GM23248 (cell line): ENCODE measurements at regions of chr10 and their contacts with region 1.

Region 1: GRCh38 chr10:112307358-112308124 is 24.3 kb downstream of the TECTB start:
- DNase-seq: peak; percentile 67
- H3K4me3 ChIP-seq: no peak overlapping the region
- H3K27ac ChIP-seq: no peak overlapping the region
- H3K4me1 ChIP-seq: peaks cover 22% of the 10 kb centered on the region
- H3K27me3 ChIP-seq: no peaks in the 10 kb centered on the region

Region 2: GRCh38 chr10:112183329-112184051 is 124.1 kb before region 1 on chr10 and contains the start of gene GPAM:
- in situ Hi-C with region 1: loop called (anchors 10 kb)
- DNase-seq: peak; percentile 94
- H3K4me3 ChIP-seq: peak within 1 kb of the TSS; percentile 80
- H3K27ac ChIP-seq: peak within 1 kb of the TSS; percentile 83
- H3K4me1 ChIP-seq: peaks cover 6% of the 10 kb centered on the region
- H3K27me3 ChIP-seq: no peaks in the 10 kb centered on the region
- total RNA-seq, gene GPAM: 9.0 and 12.5 TPM in 2 replicates

Region 3: DNA sequence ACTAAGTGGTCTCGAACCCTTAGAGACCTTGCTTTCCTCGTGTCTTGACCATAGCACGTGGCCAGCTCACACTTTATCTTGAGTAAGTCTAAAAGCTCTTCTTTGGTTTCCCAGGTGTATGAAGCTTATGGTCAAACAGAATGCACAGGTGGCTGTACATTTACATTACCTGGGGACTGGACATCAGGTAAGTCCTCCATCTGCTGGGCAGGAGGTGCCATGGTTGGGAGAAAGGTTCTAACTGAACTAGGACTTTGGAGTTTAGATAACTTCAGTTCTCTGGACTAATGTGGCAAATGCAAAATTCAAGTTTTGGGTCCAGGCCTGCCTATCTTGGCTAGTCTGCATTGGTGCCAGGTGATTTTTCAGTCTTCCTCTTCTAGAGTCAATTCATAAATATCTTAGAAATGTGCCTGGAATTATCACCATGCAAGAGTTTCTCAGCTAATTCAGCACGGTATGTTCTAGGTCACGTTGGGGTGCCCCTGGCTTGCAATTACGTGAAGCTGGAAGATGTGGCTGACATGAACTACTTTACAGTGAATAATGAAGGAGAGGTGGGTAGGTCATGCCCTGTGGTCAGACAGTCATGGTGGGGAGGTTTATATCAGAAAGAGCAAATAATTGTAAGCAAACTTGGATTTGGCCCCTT is 114.1 kb after region 1 on chr10:
- in situ Hi-C with region 1: no loop called
- DNase-seq: no peak
- H3K4me3 ChIP-seq: no peak overlapping the region
- H3K27ac ChIP-seq: no peak overlapping the region
- H3K4me1 ChIP-seq: no peaks in the 10 kb centered on the region
- H3K27me3 ChIP-seq: no peaks in the 10 kb centered on the region

Region 4: GRCh38 chr10:113891476-113891875 is 1583.9 kb after region 1 on chr10:
- in situ Hi-C with region 1: no loop called
- DNase-seq: no peak
- H3K4me3 ChIP-seq: no peak overlapping the region
- H3K27ac ChIP-seq: no peak overlapping the region
- H3K4me1 ChIP-seq: peaks cover 6% of the 10 kb centered on the region; the same call in 1 of the 2 replicates
- H3K27me3 ChIP-seq: no peaks in the 10 kb centered on the region